ENCODE measurements at regions of chr15 and their contacts with region 1.

Region 1: DNA sequence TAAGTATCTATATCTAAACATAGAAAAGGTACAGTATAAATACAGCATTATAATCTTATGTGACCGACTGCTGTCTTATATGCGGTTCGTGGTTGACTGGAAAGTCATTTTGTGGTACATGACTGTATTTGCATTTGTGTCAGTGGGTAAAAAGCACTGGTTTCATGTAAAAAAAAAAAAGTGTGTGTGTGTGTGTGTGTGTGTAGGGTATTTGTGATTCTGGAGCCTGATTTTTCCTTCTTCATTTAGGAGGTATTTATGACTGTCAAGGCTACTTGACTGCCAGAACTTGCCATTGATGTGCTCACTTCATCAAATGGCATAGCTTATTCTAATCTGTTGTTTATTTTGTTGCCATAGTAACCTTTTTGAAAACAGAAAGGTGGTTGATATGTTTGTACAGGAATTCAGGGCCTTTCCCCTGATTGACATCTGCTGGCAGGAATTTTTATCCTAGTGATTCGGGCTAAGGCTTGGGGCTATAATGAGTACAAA is 63.2 kb downstream of the AKAP13 start:
- DNase-seq: peak; percentile 52
- H3K4me3 ChIP-seq: peak overlapping the region; percentile 56
- H3K27ac ChIP-seq: peak overlapping the region; percentile 70
- H3K4me1 ChIP-seq: peaks cover 57% of the 10 kb centered on the region
- CTCF ChIP-seq: no peak

Region 2: DNA sequence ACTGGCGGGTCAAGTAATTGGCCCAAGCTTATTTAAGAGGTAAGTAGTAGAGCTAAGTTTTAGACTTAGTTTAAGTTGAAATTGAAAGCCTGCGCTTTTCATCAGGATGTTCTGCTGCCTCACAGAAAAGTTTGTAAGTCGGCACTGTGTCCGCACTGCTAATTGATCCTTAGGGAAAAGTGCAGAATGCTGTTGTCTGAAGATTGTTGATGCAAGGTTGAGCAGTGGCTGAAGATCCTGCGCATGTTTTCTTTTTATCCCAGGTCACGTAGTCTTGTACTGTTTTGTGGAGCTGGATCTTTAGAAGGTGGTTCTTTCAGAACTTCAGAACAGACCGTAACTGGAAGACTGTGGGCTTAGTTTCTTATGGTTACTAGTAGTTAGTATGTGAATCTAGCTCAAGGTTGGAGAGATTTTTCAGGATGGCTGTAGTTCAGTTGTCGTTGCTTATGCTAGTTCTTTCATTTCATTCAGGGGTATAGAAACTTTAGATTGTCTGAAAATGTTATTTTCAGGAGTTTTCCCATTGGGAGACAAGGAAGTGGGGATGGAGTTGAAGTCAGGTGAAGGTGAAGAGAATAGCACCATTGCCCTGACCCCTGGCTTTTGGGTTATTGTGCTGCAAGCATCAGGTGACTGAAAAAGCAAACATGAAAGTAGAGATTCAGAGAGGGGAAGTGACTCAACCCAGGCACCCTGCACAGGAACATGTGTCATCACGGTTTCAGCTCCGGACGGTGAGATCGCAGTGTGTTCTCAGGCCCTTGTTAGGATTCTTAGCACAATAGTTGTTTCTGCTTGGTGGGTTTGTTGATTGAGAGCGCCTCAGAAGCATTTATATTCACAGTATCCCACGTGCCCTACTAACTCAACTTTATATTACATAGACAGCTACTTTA is 30.4 kb before region 1 on chr15:
- CTCF ChIA-PET with region 1: no interaction called
- POLR2A ChIA-PET with region 1: interaction called, 24 read pairs
- intact Hi-C with region 1: loop called (anchors 5 kb)
- DNase-seq: peak; percentile 90
- H3K4me3 ChIP-seq: peak overlapping the region; percentile 49
- H3K27ac ChIP-seq: peak overlapping the region; percentile 71
- H3K4me1 ChIP-seq: peaks cover 72% of the 10 kb centered on the region
- CTCF ChIP-seq: peak; percentile 54; the same call in 1 of the 2 replicates

Region 3: DNA sequence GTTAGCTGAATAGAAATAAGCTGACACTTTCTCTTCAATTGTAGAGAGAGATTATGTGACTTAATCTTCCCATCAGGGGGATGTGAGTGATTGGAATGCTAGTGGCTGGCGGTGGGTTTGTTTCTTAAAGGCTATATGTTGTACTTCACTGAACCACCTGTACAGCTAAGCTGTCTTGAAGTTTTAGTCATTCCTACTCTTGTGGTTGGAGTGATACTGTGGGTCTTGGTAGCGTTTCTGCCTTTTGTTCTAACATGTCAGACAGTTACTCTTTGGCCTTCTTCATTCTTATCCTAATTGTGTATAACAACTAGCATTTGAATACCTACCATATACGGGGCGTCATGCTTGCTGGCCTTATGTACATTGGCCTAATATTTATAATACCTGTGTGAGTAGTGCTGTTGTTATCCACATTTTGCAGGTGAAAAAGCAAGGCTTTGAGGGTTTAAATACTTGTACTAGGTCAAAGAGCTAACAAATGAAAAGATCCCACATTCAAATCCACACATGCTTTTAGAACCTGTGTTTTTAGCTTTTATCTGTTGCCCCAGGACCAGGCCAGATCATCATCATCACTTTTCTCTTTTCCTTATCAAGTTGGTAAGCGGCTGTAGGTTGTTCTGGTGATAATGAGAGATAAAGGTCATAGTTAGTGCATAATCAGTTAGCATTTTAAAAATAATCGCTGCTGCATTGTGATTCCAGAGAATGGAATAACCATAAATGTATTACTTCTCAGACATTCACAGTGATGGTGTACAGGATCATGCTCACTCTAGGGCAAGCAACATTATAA is 13.0 kb before region 1 on chr15:
- CTCF ChIA-PET with region 1: no interaction called
- POLR2A ChIA-PET with region 1: interaction called, 11 read pairs
- intact Hi-C with region 1: no loop called
- DNase-seq: no peak
- H3K4me3 ChIP-seq: no peak overlapping the region
- H3K27ac ChIP-seq: no peak overlapping the region
- H3K4me1 ChIP-seq: peaks cover 15% of the 10 kb centered on the region
- CTCF ChIP-seq: no peak

Region 4: GRCh38 chr15:85456798-85457197 is 13.2 kb after region 1 on chr15:
- CTCF ChIA-PET with region 1: interaction called, 4 read pairs
- POLR2A ChIA-PET with region 1: interaction called, 12 read pairs
- intact Hi-C with region 1: no loop called
- DNase-seq: no peak
- H3K4me3 ChIP-seq: peak overlapping the region; percentile 28
- H3K27ac ChIP-seq: peak overlapping the region; percentile 42
- H3K4me1 ChIP-seq: peaks cover 98% of the 10 kb centered on the region
- CTCF ChIP-seq: no peak

Region 5: DNA sequence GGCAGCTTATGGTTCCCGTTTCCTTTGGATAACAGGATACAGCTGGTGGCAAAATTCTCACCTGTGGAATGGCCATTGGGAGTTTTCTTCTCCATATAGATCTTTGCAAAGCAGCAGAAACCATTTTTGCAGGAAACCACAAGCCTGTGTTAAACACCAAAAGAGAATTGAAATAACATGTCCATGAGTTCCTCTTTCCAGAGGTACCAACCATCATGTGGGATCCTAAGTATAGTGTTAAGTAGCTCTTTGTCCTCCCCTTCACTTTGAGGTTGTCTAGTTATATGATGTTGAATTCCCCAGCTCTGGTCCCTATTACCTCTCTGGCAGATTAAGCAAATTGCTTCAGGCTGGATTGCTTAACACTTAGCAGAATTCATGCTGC is 31.7 kb after region 1 on chr15:
- CTCF ChIA-PET with region 1: no interaction called
- POLR2A ChIA-PET with region 1: interaction called, 10 read pairs
- intact Hi-C with region 1: no loop called
- DNase-seq: peak; percentile 85
- H3K4me3 ChIP-seq: peak overlapping the region; percentile 52
- H3K27ac ChIP-seq: peak overlapping the region; percentile 92
- H3K4me1 ChIP-seq: peaks cover 99% of the 10 kb centered on the region
- CTCF ChIP-seq: no peak

Measured in OCI-LY7 (cell line).